Esophagus muscularis mucosa (tissue), 4 donors: ENCODE measurements at regions of chr3 and their contacts with region 1.

Region 1: GRCh38 chr3:188759336-188760005 is 412.3 kb upstream of the TPRG1 start:
- DNase-seq: no peak
- H3K4me3 ChIP-seq: no peak overlapping the region
- H3K27ac ChIP-seq: peak overlapping the region in 1 of 4 donors; percentile 26
- H3K4me1 ChIP-seq: peaks cover 2 to 52% (median 32%) of the 10 kb centered on the region in 4 donors
- H3K27me3 ChIP-seq: no peaks in the 10 kb centered on the region
- CTCF ChIP-seq: no peak
- EP300 ChIP-seq: no peak
- POLR2A ChIP-seq: no peak

Region 2: GRCh38 chr3:188720636-188721035 is 38.8 kb before region 1 on chr3:
- intact Hi-C with region 1: loop called (anchors 5 kb)
- DNase-seq: no peak
- H3K4me3 ChIP-seq: no peak overlapping the region
- H3K27ac ChIP-seq: no peak overlapping the region
- H3K4me1 ChIP-seq: peaks cover under 1 to 67% (median 54%) of the 10 kb centered on the region in 4 donors
- H3K27me3 ChIP-seq: no peaks in the 10 kb centered on the region
- CTCF ChIP-seq: no peak
- EP300 ChIP-seq: no peak
- POLR2A ChIP-seq: no peak